Gastrocnemius medialis (tissue), 4 donors: ENCODE measurements at regions of chr1 and their contacts with region 1.

Region 1: GRCh38 chr1:212665241-212666115 is 34.2 kb downstream of the BATF3 start:
- DNase-seq: peak; percentile 31 to 64
- ATAC-seq: peak; percentile 88 to 96
- H3K4me3 ChIP-seq: peak overlapping the region; percentile 61 to 73 (median 66)
- H3K27ac ChIP-seq: peak overlapping the region; percentile 39 to 74 (median 66)
- H3K4me1 ChIP-seq: peaks cover 0 to 23% of the 10 kb centered on the region in 2 donors
- H3K27me3 ChIP-seq: no peaks in the 10 kb centered on the region
- CTCF ChIP-seq: peak; percentile 83 to 92 (median 87)
- POLR2A ChIP-seq: no peak

Region 2: DNA sequence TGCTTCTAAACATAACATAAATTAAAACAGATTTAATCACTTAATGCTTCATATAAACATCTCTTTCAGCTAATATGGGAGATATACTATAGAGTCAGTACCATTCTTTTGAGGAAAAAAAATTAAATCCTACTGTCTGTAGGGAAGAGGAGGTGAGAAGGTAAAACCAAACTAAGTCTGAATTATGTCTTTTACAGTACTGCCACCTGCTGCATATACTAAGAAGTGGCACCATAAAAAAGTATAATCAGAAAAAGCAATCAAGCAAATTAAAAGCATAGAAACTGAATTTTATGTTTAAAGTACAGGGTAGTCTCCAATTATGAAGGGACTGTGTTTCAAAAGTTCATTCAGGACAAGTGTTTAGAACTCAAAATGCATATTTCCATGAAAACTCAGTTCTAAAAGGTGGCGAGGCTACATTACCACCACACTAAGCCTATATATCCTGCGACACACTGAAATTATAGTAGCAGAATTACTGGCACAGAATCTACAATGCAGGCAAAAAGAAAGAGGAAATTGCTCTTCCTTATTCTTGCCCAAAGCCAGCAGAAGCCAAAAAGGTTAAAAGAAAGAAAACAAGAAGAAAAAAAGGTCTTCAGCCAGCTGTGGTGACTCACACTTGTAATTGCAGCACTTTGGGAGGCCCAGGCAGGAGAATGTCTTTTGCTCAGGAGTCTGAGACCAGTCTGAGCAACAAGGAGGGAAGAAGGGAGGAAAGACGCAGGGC is 117.1 kb after region 1 on chr1:
- in situ Hi-C with region 1: no loop called
- intact Hi-C with region 1: loop called (anchors 1 kb)
- DNase-seq: no peak
- ATAC-seq: no peak
- H3K4me3 ChIP-seq: no peak overlapping the region
- H3K27ac ChIP-seq: no peak overlapping the region
- H3K4me1 ChIP-seq: no peaks in the 10 kb centered on the region
- H3K27me3 ChIP-seq: no peaks in the 10 kb centered on the region
- CTCF ChIP-seq: peak in 4 of 5 experiments; percentile 26 to 48 (median 43)
- POLR2A ChIP-seq: no peak

Region 3: DNA sequence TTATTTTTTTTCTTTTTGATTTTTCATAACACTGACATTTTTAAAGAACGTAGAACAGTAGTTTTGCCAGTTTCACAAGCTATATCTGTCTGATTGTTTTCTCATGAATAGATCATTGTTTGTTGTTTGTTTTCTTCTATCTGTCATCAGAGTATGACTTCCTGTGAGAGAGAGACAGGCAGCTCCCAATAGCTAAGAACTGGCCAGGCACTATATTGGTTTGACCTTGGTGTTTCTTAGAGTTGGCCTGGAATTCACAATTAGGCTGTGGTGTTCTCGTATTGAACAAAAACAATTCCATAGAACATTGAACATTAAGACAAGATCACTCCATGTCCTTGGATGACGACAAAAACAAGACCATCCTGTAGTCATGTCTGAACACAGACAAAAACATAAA is 429.0 kb after region 1 on chr1:
- in situ Hi-C with region 1: no loop called
- intact Hi-C with region 1: no loop called
- DNase-seq: no peak
- ATAC-seq: no peak
- H3K4me3 ChIP-seq: no peak overlapping the region
- H3K27ac ChIP-seq: no peak overlapping the region
- H3K4me1 ChIP-seq: no peaks in the 10 kb centered on the region
- H3K27me3 ChIP-seq: no peaks in the 10 kb centered on the region
- CTCF ChIP-seq: no peak
- POLR2A ChIP-seq: no peak